AG04449 (cell line): ENCODE measurements at regions of chr15 and their contacts with region 1.

Region 1: GRCh38 chr15:99104788-99105513 is at the start of gene SYNM:
- DNase-seq: no peak
- H3K4me3 ChIP-seq: peak within 1 kb of the TSS; percentile 64
- CTCF ChIP-seq: peak; percentile 67

Region 2: GRCh38 chr15:99082798-99083197 is 22.2 kb before region 1 on chr15:
- CTCF ChIA-PET with region 1: interaction called, 116 read pairs
- POLR2A ChIA-PET with region 1: no interaction called
- DNase-seq: no peak
- H3K4me3 ChIP-seq: no peak overlapping the region
- CTCF ChIP-seq: no peak

Region 3: GRCh38 chr15:99123706-99124451 is 18.9 kb after region 1 on chr15:
- CTCF ChIA-PET with region 1: interaction called, 37 read pairs
- POLR2A ChIA-PET with region 1: interaction called, 7 read pairs
- DNase-seq: peak; percentile 89
- H3K4me3 ChIP-seq: peak overlapping the region; percentile 39
- CTCF ChIP-seq: no peak

Region 4: GRCh38 chr15:99202180-99202552 is 97.2 kb after region 1 on chr15:
- CTCF ChIA-PET with region 1: interaction called, 356 read pairs
- POLR2A ChIA-PET with region 1: no interaction called
- DNase-seq: no peak
- H3K4me3 ChIP-seq: no peak overlapping the region
- CTCF ChIP-seq: no peak

Region 5: GRCh38 chr15:99224372-99225214 is 119.6 kb after region 1 on chr15:
- CTCF ChIA-PET with region 1: interaction called, 356 read pairs
- POLR2A ChIA-PET with region 1: no interaction called
- DNase-seq: no peak
- H3K4me3 ChIP-seq: no peak overlapping the region
- CTCF ChIP-seq: no peak